Heart left ventricle (tissue), 16 donors: ENCODE measurements at regions of chrX and their contacts with region 1.

Region 1: GRCh38 chrX:110450050-110450449 is 91.4 kb downstream of the RTL9 start:
- DNase-seq: peak; percentile 53 to 74 (median 54)
- ATAC-seq: peak; percentile 86 to 93 (median 90)
- H3K4me3 ChIP-seq: no peak overlapping the region
- H3K27ac ChIP-seq: no peak overlapping the region
- H3K4me1 ChIP-seq: no peaks in the 10 kb centered on the region
- H3K27me3 ChIP-seq: peaks cover 0 to 45% (median 0%) of the 10 kb centered on the region in 9 donors
- CTCF ChIP-seq: peak; percentile 45 to 78 (median 64)
- POLR2A ChIP-seq: no peak

Region 2: GRCh38 chrX:110558406-110558805 is 108.4 kb after region 1 on chrX:
- intact Hi-C with region 1: no loop called
- DNase-seq: no peak
- ATAC-seq: no peak
- H3K4me3 ChIP-seq: no peak overlapping the region
- H3K27ac ChIP-seq: no peak overlapping the region
- H3K4me1 ChIP-seq: no peaks in the 10 kb centered on the region
- H3K27me3 ChIP-seq: peaks cover 0 to 4% (median 0%) of the 10 kb centered on the region in 9 donors
- CTCF ChIP-seq: no peak
- POLR2A ChIP-seq: no peak

Region 3: GRCh38 chrX:110665223-110666002 is 215.4 kb after region 1 on chrX:
- intact Hi-C with region 1: loop called in 5 of 10 experiments (anchors 5 to 10 kb)
- DNase-seq: peak in 1 of 5 donors; percentile 5
- ATAC-seq: peak in 3 of 4 donors; percentile 34 to 47 (median 38)
- H3K4me3 ChIP-seq: no peak overlapping the region
- H3K27ac ChIP-seq: no peak overlapping the region
- H3K4me1 ChIP-seq: no peaks in the 10 kb centered on the region
- H3K27me3 ChIP-seq: peaks cover 0 to 10% (median 0%) of the 10 kb centered on the region in 9 donors
- CTCF ChIP-seq: peak in 10 of 12 donors; percentile 14 to 44 (median 34)
- POLR2A ChIP-seq: no peak

Region 4: DNA sequence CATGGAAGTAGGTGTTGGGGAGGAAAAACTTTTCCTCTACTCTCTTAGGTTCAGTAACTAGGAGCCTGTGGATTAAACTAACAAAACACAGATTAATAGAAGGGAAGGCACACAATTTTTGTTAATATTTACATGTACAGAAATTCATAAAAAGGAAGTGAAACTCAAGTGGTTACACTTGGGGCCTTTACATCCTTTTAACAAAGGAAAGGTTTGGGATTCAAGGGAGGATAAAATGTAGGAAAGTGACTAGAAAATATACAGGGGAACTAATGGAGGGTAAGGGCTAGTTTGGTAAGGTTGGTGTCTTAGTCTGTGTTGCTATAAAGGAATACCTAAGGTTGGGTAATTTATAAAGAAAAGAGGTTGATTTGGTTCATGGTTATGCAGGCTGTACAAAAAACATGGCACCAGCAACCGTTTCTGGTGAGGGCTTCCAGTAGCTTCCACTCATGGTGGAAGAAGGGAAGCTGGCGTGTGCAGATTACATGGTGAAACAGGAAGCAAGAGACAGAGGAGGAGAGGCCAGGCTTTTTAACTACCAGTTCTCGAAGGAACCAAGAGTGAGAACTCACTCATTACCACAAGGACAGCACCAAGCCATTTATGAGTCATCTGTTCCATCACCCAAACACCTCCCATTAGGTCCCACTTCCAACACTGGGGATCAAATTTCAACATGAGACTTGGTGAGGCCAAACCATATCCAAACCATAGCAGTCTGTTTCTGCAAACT is 221.2 kb after region 1 on chrX:
- intact Hi-C with region 1: loop called in 5 of 10 experiments (anchors 5 to 10 kb)
- DNase-seq: no peak
- ATAC-seq: no peak
- H3K4me3 ChIP-seq: no peak overlapping the region
- H3K27ac ChIP-seq: no peak overlapping the region
- H3K4me1 ChIP-seq: no peaks in the 10 kb centered on the region
- H3K27me3 ChIP-seq: peaks cover 0 to 12% (median 0%) of the 10 kb centered on the region in 9 donors
- CTCF ChIP-seq: no peak
- POLR2A ChIP-seq: no peak

Region 5: GRCh38 chrX:110847334-110847733 is 397.3 kb after region 1 on chrX:
- intact Hi-C with region 1: loop called (anchors 1 to 5 kb)
- DNase-seq: no peak
- ATAC-seq: peak in 3 of 4 donors; percentile 60 to 73 (median 70)
- H3K4me3 ChIP-seq: no peak overlapping the region
- H3K27ac ChIP-seq: no peak overlapping the region
- H3K4me1 ChIP-seq: no peaks in the 10 kb centered on the region
- H3K27me3 ChIP-seq: peaks cover 0 to 13% (median 0%) of the 10 kb centered on the region in 9 donors
- CTCF ChIP-seq: peak; percentile 22 to 75 (median 58)
- POLR2A ChIP-seq: no peak

Region 6: GRCh38 chrX:111244235-111244750 is 794.2 kb after region 1 on chrX:
- intact Hi-C with region 1: loop called in 1 of 10 experiments (anchors 10 kb)
- DNase-seq: no peak
- ATAC-seq: no peak
- H3K4me3 ChIP-seq: no peak overlapping the region
- H3K27ac ChIP-seq: no peak overlapping the region
- H3K4me1 ChIP-seq: no peaks in the 10 kb centered on the region
- H3K27me3 ChIP-seq: peaks cover 0 to 38% (median 0%) of the 10 kb centered on the region in 9 donors
- CTCF ChIP-seq: peak in 10 of 12 donors; percentile 18 to 49 (median 29)
- POLR2A ChIP-seq: no peak

Region 7: DNA sequence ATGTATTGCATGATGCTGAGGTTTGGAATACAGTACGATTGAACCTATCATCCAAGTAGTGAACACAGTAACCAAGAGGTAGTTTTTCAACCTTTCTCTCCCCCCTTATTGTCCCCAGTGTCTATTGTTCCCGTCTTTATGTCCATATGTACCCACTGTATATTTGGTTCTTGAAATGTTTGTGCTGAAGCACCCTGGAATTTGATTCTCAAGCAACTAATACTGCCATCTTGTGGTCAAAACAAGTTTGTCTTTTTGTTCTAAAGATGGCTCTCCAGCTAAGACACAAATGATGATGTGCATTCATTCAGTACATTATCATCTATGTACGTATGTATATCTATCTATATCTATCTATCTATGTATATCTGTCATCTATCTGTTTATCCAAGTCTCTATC is 995.4 kb after region 1 on chrX:
- intact Hi-C with region 1: loop called in 2 of 10 experiments (anchors 10 kb)
- DNase-seq: no peak
- ATAC-seq: peak in 1 of 4 donors; percentile 47
- H3K4me3 ChIP-seq: no peak overlapping the region
- H3K27ac ChIP-seq: no peak overlapping the region
- H3K4me1 ChIP-seq: no peaks in the 10 kb centered on the region
- H3K27me3 ChIP-seq: peaks cover 0 to 37% (median 0%) of the 10 kb centered on the region in 9 donors
- CTCF ChIP-seq: peak; percentile 34 to 69 (median 50)
- POLR2A ChIP-seq: no peak